SK-N-SH (cell line): ENCODE measurements at regions of chr10 and their contacts with region 1.

Region 1: DNA sequence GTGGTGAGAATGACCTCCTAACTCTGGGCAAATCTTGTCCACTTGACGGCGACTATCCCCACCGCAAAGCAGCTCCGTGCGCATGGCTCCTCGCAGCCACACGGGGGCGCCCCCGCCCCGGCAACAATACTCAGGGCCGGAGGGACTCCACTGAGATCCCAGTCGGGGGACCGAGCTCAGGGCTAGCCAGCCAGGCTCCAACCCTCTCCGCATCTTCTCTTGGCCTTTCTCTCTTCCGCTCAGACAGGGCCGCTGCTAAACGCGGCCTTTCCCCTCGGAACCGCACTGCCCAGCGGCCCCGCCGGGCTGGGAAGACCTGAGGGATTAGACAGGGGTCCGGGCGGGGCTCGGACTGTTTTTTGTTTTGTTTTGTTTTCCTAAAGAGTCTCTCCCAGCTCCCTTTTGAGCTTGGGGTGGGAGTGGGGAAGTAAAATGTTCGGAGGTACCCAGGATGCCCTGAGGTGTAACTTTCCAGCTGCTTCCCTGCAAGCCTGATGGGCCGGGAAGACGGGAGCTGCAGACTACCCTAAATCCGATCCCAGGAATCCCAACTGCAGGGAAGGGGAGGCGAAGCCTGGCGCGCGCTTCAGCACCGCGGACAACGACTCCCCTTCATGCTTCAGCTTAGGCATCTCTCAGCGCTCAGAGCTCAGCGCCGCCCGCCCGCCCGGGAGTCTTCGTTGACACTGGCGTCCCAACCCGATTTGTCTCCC is 2.7 kb downstream of the KCNIP2 start:
- DNase-seq: peak; percentile 93
- H3K4me3 ChIP-seq: peak overlapping the region in 1 of 2 experiments; percentile 45; a peak in 1 of 4 replicates
- H3K27ac ChIP-seq: no peak overlapping the region
- H3K4me1 ChIP-seq: peaks cover 0 to 16% of the 10 kb centered on the region in 2 experiments; a peak in 1 of 4 replicates
- H3K27me3 ChIP-seq: no peaks in the 10 kb centered on the region
- CTCF ChIP-seq: peak; percentile 96
- EP300 ChIP-seq: no peak
- RAD21 ChIP-seq: peak; percentile 90

Region 2: GRCh38 chr10:101319241-101319915 is 521.5 kb before region 1 on chr10:
- CTCF ChIA-PET with region 1: no interaction called
- POLR2A ChIA-PET with region 1: no interaction called
- DNase-seq: no peak
- H3K4me3 ChIP-seq: no peak overlapping the region
- H3K27ac ChIP-seq: no peak overlapping the region
- H3K4me1 ChIP-seq: peaks cover 0 to 14% of the 10 kb centered on the region in 2 experiments; a peak in 1 of 4 replicates
- H3K27me3 ChIP-seq: no peaks in the 10 kb centered on the region; the same call in 1 of the 2 replicates
- CTCF ChIP-seq: no peak
- EP300 ChIP-seq: no peak
- RAD21 ChIP-seq: no peak

Region 3: GRCh38 chr10:101655570-101655969 is 185.3 kb before region 1 on chr10:
- CTCF ChIA-PET with region 1: no interaction called
- POLR2A ChIA-PET with region 1: no interaction called
- DNase-seq: no peak
- H3K4me3 ChIP-seq: no peak overlapping the region
- H3K27ac ChIP-seq: no peak overlapping the region
- H3K4me1 ChIP-seq: no peaks in the 10 kb centered on the region
- H3K27me3 ChIP-seq: no peaks in the 10 kb centered on the region
- CTCF ChIP-seq: no peak
- EP300 ChIP-seq: no peak
- RAD21 ChIP-seq: no peak

Region 4: GRCh38 chr10:101671453-101671852 is 169.4 kb before region 1 on chr10:
- CTCF ChIA-PET with region 1: no interaction called
- POLR2A ChIA-PET with region 1: no interaction called
- DNase-seq: no peak
- H3K4me3 ChIP-seq: no peak overlapping the region
- H3K27ac ChIP-seq: no peak overlapping the region
- H3K4me1 ChIP-seq: peaks cover 0 to 9% of the 10 kb centered on the region in 2 experiments; a peak in 1 of 4 replicates
- H3K27me3 ChIP-seq: no peaks in the 10 kb centered on the region
- CTCF ChIP-seq: no peak
- EP300 ChIP-seq: no peak
- RAD21 ChIP-seq: no peak

Region 5: DNA sequence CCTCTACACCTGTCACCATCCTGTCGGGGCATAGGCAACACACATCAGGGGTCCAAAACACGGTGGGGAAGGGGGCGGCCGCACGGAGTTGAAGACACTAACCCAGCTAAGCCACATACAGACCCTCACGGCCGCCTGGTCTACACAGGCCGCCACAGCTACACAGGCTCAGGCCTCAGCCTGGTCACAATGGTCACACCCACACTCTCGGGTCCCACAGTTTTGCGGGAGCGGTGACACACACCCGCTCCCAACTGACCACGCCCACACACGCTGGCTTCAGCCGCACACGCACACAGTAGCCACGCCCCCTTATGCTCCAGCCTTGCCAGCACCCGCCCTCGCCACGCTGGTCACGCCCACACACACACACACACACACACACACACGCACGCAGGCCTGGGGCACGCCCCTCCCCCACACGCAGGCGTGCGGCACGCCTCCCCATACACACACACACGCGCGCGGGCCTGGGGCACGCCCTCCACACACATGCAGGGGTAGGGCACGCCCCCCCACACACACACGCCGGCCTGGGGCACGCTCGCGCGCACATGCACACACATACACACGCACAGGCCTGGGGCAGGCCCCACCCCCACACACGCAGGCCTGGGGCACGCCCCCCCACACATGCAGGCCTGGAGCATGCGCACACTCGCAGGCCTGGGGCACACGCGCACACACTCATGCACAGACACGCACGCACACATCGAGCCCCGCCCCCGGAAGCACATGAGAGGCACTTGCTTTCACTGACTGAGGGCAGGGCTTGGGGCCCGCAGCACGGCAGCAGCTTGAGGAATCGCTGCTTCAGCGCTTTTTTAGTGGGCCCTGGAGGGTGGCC is 10.4 kb before region 1 on chr10:
- CTCF ChIA-PET with region 1: interaction called, 73 read pairs
- POLR2A ChIA-PET with region 1: interaction called, 3 read pairs
- DNase-seq: peak; percentile 96
- H3K4me3 ChIP-seq: peak overlapping the region; percentile 45 to 49
- H3K27ac ChIP-seq: peak overlapping the region; percentile 41 to 87; a peak in 3 of 4 replicates
- H3K4me1 ChIP-seq: peaks cover 14 to 35% of the 10 kb centered on the region in 2 experiments; a peak in 3 of 4 replicates
- H3K27me3 ChIP-seq: no peaks in the 10 kb centered on the region
- CTCF ChIP-seq: no peak
- EP300 ChIP-seq: no peak
- RAD21 ChIP-seq: no peak

Region 6: GRCh38 chr10:101889256-101890210 is 48.6 kb after region 1 on chr10:
- CTCF ChIA-PET with region 1: interaction called, 108 read pairs
- POLR2A ChIA-PET with region 1: no interaction called
- DNase-seq: peak; percentile 66
- H3K4me3 ChIP-seq: no peak overlapping the region; a peak in 1 of 4 replicates
- H3K27ac ChIP-seq: no peak overlapping the region
- H3K4me1 ChIP-seq: peaks cover 0 to 2% of the 10 kb centered on the region in 2 experiments; a peak in 1 of 4 replicates
- H3K27me3 ChIP-seq: no peaks in the 10 kb centered on the region
- CTCF ChIP-seq: peak; percentile 97
- EP300 ChIP-seq: no peak
- RAD21 ChIP-seq: peak; percentile 86

Region 7: GRCh38 chr10:101903827-101904550 is 63.1 kb after region 1 on chr10:
- CTCF ChIA-PET with region 1: interaction called, 11 read pairs
- POLR2A ChIA-PET with region 1: no interaction called
- DNase-seq: no peak
- H3K4me3 ChIP-seq: no peak overlapping the region
- H3K27ac ChIP-seq: no peak overlapping the region
- H3K4me1 ChIP-seq: no peaks in the 10 kb centered on the region
- H3K27me3 ChIP-seq: no peaks in the 10 kb centered on the region
- CTCF ChIP-seq: no peak
- EP300 ChIP-seq: no peak
- RAD21 ChIP-seq: no peak

Region 8: DNA sequence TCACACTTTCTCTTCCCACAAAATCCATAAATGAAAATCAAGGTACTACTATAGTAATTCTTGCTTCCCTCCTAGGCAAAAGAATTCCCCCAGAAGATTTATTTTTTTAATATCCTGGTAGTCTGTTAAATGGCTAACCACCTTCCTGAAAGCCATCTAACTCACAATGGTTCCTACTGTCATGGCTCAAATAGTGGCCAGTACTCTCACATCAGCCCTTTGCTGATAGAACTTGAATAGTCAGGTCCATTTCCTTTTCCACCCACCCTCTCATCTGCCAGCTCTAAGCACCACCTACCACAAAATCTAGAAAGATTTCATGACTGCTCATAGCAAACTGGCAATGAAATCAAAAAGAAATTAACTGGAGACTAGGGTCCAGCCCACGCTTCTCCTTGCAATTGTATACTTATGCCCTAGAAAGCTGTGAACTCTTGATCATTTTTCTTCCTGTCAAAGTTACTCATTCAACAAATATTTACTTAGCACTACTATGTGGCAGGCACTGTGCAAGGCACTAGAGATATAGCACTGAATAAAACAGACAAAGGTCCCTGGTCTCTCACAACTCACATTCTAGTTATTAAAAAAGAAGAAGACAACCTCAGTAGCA is 154.7 kb after region 1 on chr10:
- CTCF ChIA-PET with region 1: interaction called, 11 read pairs
- POLR2A ChIA-PET with region 1: no interaction called
- DNase-seq: no peak
- H3K4me3 ChIP-seq: no peak overlapping the region
- H3K27ac ChIP-seq: no peak overlapping the region
- H3K4me1 ChIP-seq: peaks cover 0 to 3% of the 10 kb centered on the region in 2 experiments; a peak in 1 of 4 replicates
- H3K27me3 ChIP-seq: no peaks in the 10 kb centered on the region
- CTCF ChIP-seq: no peak
- EP300 ChIP-seq: no peak
- RAD21 ChIP-seq: no peak

Region 9: DNA sequence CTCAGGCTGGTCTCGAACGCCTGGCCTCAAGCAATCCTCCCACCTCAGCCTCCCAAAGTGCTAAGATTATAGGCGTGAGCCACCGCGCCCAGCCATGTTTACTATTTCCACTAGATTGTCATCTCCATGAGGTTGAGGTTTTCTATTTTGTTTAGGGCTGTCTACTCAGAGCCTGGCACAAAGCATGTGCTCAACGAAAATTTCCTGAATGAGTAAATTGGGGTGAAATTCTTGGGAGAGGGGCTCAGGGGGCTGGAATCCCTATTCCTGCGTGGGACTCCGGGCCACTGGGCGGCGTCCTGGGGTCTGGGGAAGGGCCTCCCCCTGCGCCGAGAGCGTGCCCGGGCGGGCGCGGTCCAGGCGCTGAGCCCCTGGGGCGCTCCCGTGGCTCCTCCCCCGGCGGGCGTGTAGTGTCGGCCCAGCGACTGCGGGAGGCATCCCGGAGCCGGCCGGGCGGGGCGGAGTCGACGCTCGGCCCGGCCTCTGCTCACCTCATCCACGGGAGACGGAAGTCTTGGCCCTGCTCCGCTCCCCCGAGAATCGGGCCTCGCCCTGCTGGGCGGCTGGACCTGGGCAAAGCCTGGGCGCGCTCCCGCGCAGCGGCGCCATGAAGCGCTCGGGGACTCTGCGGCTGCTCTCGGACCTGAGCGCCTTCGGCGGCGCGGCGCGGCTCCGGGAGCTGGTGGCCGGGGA is 224.1 kb after region 1 on chr10 and contains the start of gene HPS6:
- CTCF ChIA-PET with region 1: interaction called, 19 read pairs
- POLR2A ChIA-PET with region 1: no interaction called
- DNase-seq: peak; percentile 98
- H3K4me3 ChIP-seq: peak within 1 kb of the TSS; percentile 78 to 92
- H3K27ac ChIP-seq: peak within 1 kb of the TSS; percentile 74
- H3K4me1 ChIP-seq: peaks cover 8 to 12% of the 10 kb centered on the region in 2 experiments; a peak in 3 of 4 replicates
- H3K27me3 ChIP-seq: no peaks in the 10 kb centered on the region
- CTCF ChIP-seq: peak; percentile 40; the same call in 1 of the 2 replicates
- EP300 ChIP-seq: peak in 1 of 2 experiments; percentile 14; a peak in 1 of 4 replicates
- RAD21 ChIP-seq: peak; percentile 19
- polyA plus RNA-seq, gene HPS6: 7.3 and 7.8 TPM in 2 replicates